ENCODE measurements at regions of chr2 and their contacts with region 1.

Region 1: DNA sequence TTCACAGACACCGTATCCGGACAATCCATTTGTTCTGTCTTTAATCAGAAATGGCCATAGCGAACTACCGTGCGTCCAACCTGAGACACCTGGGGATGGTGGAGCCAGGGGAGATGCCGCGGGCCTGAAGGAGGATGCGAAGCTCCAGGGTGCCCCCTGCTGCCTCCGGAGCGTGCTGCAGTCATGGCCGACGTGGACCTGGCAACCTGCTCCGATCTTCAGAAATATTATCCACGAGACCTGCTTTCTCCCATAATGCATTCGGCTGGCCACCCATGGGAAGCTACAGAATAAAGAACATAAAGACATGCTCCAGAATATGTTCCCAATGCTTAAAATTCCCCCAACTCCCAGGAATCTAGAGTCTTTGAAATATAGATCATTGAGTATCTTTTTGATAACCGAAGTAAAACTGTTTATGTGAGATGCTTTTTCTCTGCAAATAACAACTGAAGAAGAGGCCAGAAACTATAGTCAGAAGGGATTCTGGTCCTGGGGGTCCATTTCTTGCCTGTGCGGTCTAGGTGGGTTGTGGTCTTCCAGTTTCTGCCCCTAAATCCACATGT is 30.7 kb upstream of the SLC66A3 start:
- ATAC-seq: peak; percentile 73 to 91 (median 84)
- H3K4me3 ChIP-seq: no peak overlapping the region
- H3K27ac ChIP-seq: no peak overlapping the region
- H3K4me1 ChIP-seq: peaks cover 3 to 7% of the 10 kb centered on the region in 2 donors

Region 2: GRCh38 chr2:10832203-10832936 is 292.2 kb before region 1 on chr2:
- in situ Hi-C with region 1: loop called (anchors 5 to 25 kb)
- ATAC-seq: peak; percentile 89 to 95 (median 93)
- H3K4me3 ChIP-seq: peak overlapping the region in 2 of 5 donors; percentile 6 to 12
- H3K27ac ChIP-seq: no peak overlapping the region
- H3K4me1 ChIP-seq: peaks cover 19 to 26% of the 10 kb centered on the region in 2 donors

Region 3: GRCh38 chr2:11411768-11412448 is 287.3 kb after region 1 on chr2:
- in situ Hi-C with region 1: loop called in 3 of 9 experiments (anchors 25 kb)
- ATAC-seq: peak in 3 of 8 experiments; percentile 29 to 54 (median 43)
- H3K4me3 ChIP-seq: no peak overlapping the region
- H3K27ac ChIP-seq: no peak overlapping the region
- H3K4me1 ChIP-seq: peaks cover 0 to 7% of the 10 kb centered on the region in 2 donors

Region 4: DNA sequence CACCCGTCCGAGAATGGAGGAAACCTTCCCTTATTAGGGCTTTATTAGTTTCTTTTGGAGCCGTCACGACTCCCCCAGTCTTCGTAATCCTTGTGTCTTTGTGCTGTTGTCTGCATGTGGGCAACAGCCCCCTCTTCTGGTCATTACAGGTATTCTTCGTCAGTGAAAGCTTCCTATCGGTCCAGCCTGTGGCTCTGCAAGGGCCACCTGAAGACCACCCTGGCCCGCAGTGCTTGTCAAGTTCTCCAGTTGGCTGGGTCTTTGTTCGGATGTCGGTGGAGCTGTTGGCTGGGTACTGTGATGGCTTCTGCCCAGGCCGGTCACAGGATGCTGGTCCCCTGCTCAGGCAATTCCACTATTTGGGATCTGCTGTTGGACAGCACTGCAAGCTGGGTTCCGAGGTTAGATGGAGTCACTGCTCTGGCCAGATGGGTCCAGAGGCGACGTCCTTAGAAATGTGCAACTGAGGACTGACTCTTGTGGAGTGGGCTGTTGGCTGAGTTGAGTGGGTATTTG is 322.2 kb after region 1 on chr2:
- in situ Hi-C with region 1: loop called in 1 of 9 experiments (anchors 25 kb)
- ATAC-seq: peak; percentile 68 to 94 (median 84)
- H3K4me3 ChIP-seq: no peak overlapping the region
- H3K27ac ChIP-seq: no peak overlapping the region
- H3K4me1 ChIP-seq: peaks cover 0 to 3% of the 10 kb centered on the region in 2 donors

Region 5: DNA sequence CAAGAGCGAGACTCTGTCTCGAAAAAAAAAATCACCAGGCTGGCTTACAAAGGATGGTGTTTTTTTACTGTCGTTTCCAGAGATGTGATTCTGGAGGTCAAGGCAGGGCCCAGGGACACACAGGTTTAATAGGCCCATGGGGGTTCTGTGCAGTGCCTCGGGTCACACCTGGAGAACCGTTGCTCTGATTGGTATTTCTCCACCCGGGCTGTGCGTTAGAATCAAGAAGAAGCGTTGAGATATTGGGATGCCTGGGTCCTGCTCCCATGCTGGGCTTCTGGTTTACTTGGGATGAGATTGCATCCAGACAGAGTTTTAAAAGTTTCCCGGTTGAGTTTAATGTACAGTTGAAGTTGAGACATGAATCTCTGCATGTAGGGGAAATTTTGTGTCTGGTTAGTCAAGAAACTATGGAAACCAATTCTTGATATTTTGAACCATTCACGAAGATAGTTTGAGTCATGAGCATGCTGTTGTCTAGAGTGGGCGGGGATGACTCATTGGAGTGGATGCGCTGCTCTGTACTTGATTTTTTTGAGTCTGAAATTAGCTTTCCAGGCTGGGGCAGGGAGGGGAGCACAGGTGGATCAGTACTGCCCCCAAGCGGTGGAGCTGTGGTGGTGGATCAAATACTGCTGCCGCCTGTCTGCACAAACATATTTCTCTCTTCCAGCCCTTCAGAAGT is 459.4 kb after region 1 on chr2:
- in situ Hi-C with region 1: loop called in 2 of 9 experiments (anchors 25 kb)
- ATAC-seq: peak; percentile 92 to 98 (median 97)
- H3K4me3 ChIP-seq: no peak overlapping the region
- H3K27ac ChIP-seq: no peak overlapping the region
- H3K4me1 ChIP-seq: peaks cover 0 to 14% of the 10 kb centered on the region in 2 donors

Measured in motor neuron (in vitro differentiated cells).